Activated naive CD4-positive, alpha-beta T cell treated with anti-CD3 and anti-CD28 coated beads for 36 hours (primary cell): ENCODE measurements at regions of chr19 and their contacts with region 1.

Region 1: DNA sequence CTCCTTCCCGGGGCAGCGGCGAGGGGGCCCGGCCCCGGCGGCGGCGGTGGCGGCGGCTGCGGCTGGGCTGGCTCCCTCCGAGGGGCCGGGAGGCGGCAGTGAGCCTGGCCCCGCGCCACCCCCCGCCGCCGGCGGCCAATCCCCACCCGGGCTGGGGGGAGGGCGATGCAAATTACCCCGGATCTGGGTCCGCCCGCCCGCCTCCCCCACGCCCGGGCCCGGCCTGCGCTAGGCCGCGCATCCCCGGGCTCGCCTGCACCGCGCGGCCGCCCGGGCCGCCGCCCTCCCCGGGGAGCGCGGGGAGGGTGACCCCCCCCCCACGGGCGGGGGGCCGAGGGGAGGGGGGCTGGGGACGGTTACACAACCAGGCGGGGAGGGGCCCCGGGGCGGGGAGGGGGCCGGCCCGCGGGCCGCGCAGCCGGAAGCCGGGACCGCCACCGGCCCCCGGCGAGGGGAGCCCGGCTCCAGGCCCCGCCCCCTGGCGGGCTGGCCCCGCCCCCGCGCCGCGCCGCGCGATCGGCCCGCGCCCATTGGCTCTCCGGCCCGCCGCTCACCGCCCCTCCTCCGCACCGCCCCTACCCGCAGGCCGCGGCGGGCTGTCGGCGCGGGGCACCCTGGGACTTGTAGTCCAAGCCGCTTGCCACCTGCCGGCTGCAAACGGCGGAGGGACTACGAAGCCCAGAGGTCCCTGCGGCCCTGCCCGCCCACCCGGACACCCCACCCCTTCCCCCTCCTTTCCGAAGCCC is 1.1 kb downstream of the ZBTB7A start:
- DNase-seq: peak; percentile 96
- H3K4me3 Mint-ChIP-seq: peak overlapping the region; percentile 56
- H3K27ac Mint-ChIP-seq: no peak overlapping the region
- H3K4me1 Mint-ChIP-seq: peaks cover 36% of the 10 kb centered on the region
- H3K27me3 Mint-ChIP-seq: no peaks in the 10 kb centered on the region

Region 2: DNA sequence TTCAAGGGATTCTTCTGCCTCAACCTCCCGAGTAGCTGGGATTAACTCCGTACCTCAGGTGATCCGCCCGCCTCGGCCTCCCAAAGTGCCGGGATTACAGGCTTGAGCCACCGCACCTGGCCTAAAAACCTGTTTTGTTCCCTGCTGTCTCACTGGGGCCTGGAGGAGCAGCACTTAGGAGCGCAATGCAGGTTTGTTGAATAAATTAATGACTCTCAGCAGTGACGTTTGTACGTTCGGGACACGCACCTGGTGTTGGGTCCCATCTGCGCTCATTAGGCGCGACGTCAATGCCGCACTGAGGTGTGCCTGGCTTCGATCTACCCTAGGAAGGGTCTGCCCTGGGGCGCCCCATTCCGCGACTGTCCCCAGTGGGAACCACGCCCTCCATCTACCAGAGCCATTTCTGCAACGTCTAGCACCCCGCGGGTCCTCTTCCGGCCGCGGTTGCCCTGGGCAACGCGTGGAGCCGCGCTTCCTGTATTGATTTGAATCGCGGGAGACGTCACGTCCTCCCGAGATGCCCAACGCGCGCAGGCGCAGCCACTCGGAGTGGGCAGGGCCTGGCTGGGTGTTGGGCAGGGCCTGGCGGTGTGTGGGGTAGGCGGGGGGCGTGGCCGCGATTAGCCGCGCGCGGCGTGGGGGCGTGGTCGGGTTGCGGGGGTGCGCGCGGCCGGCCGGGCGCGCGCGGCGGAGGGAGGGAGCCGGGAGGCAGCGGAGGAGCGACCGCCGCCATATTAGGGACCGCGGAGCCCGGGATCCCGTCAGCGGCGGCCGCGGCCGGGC is 559.8 kb before region 1 on chr19 and contains the start of gene FZR1:
- CTCF ChIA-PET with region 1: no interaction called
- intact Hi-C with region 1: loop called (anchors 5 kb)
- DNase-seq: peak; percentile 99
- H3K4me3 Mint-ChIP-seq: peak within 1 kb of the TSS; percentile 90
- H3K27ac Mint-ChIP-seq: peak within 1 kb of the TSS; percentile 92
- H3K4me1 Mint-ChIP-seq: peaks cover 39% of the 10 kb centered on the region
- H3K27me3 Mint-ChIP-seq: no peaks in the 10 kb centered on the region
- total RNA-seq, gene FZR1: 40.3 to 46.3 TPM

Region 3: DNA sequence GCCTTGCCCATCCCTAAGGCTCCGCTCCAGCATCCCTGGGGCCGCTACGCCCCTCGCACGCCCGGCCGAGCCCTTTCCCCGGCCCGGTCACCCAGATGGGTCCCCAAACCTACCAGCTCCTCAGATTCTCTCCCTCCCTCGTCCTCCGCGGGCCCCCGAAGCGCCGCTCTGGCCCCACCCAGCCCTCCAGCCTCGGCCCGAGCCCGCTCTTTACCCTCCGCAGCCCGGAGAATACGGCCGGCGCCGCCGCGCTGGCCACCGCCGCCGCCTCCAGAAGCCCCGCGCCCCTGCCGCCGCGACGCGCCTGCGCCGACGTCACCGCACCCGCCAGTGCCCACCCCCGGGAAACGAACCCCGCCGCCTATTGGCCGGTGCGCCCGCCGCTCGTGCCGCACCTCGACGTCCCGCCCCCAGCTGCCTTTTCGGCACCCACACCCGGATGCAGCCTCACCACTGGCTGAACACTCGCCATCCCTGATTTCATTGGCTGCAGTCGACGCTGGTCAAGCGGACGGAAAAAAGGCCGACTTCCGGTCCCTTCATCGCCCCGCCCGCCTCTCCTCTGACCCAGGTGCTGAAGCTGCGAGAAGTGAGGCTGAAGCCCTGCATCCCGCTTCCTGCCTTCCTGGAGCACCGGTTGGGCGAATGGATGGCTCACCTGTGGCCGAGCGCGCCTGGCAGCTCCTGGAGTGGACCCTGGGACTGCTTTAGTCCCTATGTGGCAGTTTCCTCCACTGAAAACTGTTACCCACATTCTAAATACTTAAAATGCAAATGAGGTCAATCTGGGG is 94.6 kb before region 1 on chr19 and contains the start of gene DAPK3:
- CTCF ChIA-PET with region 1: no interaction called
- intact Hi-C with region 1: no loop called
- DNase-seq: peak; percentile 96
- H3K4me3 Mint-ChIP-seq: peak within 1 kb of the TSS; percentile 84
- H3K27ac Mint-ChIP-seq: peak within 1 kb of the TSS; percentile 44
- H3K4me1 Mint-ChIP-seq: peaks cover 22% of the 10 kb centered on the region
- H3K27me3 Mint-ChIP-seq: no peaks in the 10 kb centered on the region
- total RNA-seq, gene DAPK3: 19.3 to 19.6 TPM

Region 4: DNA sequence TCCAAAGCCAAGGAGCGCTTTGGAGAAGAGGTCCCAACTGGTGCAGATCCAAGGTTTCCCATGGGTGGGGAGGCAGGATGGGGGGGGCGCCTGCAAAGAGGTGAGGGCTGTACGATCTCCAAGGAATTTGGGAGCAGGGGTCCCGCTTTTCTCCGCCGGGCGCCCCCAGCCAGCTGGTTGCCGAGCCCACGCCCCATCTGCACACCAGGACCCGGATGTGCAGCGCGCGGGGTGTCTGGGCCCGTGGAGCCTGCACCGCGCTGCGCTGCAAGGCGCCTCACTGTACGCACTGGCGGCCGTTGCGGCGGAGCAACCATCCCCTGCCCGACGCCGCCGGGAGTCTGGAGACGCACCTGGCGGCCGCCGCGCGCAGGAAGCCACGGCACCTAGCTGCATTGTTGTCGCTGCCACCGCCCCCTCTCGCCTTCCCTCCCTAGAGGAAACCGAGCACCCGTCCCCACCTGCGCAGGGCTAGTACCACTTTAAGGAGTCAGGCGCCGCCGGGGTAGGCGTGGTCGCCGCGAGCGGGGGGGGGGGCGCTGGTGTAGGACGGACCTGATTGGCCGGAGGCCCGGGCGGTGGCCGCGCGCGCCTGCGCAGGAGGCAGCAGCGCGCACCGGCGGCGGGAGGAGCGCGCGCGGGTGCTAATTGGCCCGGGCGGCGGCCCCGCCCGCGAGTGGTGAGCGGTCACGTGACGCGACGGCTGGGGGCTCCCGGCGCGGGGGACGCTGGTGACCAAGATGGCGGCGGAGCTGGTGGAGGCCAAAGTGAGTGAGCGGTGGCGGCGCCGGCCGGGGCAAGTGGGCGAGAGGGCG is 58.4 kb before region 1 on chr19 and contains the start of gene PIAS4:
- CTCF ChIA-PET with region 1: no interaction called
- intact Hi-C with region 1: loop called (anchors 1 kb)
- DNase-seq: peak; percentile 96
- H3K4me3 Mint-ChIP-seq: peak within 1 kb of the TSS; percentile 84
- H3K27ac Mint-ChIP-seq: peak within 1 kb of the TSS; percentile 79
- H3K4me1 Mint-ChIP-seq: peaks cover 31% of the 10 kb centered on the region
- H3K27me3 Mint-ChIP-seq: no peaks in the 10 kb centered on the region
- total RNA-seq, gene PIAS4: 16.1 to 20.1 TPM

Region 5: GRCh38 chr19:4023600-4024398 is 41.8 kb before region 1 on chr19:
- CTCF ChIA-PET with region 1: no interaction called
- intact Hi-C with region 1: no loop called
- DNase-seq: no peak
- H3K4me3 Mint-ChIP-seq: no peak overlapping the region
- H3K27ac Mint-ChIP-seq: no peak overlapping the region
- H3K4me1 Mint-ChIP-seq: no peaks in the 10 kb centered on the region
- H3K27me3 Mint-ChIP-seq: no peaks in the 10 kb centered on the region

Region 6: DNA sequence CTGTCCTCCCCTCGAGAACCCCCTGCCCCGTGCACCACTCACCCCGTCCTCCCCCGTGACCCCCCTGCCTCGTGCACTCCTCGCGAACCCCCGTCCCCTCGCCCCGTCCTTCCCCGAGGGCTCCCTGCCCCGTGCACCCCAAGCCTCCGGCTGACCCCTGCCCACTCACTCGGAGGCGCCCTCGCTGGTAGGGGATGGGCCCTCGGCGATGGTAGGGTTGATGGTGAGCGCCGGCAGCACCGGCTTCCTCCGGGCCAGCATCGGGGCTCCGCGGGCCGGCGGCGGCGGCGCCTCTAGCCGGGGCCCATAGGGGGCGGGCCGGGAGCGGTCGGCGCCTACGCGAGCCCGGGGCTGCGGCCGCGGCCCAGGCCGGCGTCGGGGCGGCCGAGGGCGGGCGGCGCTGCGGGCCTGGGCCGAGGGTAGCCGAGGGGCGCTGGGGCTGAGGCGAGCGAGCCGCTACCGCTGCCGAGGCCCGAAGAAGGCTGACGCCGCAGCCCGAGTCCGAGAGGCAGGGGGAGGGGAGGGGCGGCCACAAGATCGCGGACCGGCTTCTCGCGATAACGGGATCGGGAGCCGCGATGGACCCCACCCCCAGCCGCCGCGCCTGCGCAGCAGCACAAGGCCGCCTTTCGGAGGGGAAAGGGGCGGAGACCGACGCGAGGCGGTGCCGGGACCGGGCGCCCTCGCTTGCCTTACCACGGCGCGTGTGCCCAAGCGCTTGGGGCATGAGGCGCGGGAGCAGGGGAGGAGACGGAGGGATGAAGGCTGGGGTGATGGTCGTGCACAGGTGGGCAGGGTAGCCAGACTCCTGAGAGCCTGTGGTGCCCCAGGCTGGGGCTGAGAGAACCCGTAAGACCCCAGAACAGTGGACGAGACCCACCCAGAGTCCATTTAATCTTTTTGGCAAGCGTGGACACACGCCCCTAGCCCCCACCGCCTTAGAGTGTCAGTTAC is 58.3 kb after region 1 on chr19 and contains the start of gene MAP2K2:
- CTCF ChIA-PET with region 1: no interaction called
- intact Hi-C with region 1: loop called (anchors 1 kb)
- DNase-seq: peak; percentile 96
- H3K4me3 Mint-ChIP-seq: peak within 1 kb of the TSS; percentile 85
- H3K27ac Mint-ChIP-seq: peak within 1 kb of the TSS; percentile 84
- H3K4me1 Mint-ChIP-seq: peaks cover 24% of the 10 kb centered on the region
- H3K27me3 Mint-ChIP-seq: no peaks in the 10 kb centered on the region
- total RNA-seq, gene MAP2K2: 101 to 103 TPM

Region 7: DNA sequence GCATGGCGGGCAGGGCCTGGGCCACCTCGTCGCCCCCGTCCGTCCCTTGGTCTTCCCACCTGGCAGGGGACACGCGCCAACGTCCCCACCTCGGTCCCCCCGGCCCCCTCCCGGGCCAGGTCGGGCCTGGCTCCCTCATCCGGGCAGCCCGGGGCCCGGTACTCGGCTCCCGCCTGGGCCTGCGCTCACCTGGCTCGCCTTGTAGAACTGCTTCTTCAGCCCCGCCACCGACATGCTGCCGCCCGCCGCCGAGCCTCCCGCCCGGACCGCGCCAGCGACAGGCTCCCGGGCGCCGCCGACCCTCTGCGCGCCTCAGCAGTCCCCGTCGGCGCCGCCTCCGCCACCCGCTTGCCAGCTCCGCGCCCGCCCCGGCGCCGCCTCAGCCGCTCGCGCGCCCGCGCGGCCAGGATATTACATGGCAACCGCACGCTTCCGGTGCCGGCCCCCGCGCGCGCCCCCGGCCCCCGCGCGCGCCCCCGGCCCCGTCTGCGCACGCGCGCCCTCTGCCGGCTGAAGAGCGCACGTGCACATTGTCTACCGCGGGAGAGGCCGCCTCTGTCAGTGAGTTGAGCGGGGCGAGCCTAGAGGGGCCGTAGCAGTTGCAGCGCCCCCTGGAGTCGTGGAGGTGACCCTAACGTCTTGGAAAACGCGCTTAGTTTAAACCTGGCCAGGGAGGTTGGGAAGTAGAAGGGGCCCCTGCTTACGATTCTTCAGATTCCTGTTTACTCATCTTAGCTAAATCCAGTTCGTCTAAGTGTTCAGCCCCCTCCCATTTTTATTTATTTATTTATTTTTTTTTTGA is 334.7 kb after region 1 on chr19 and contains the start of gene SH3GL1:
- CTCF ChIA-PET with region 1: no interaction called
- intact Hi-C with region 1: loop called (anchors 2 kb)
- DNase-seq: peak; percentile 94
- H3K4me3 Mint-ChIP-seq: peak within 1 kb of the TSS; percentile 94
- H3K27ac Mint-ChIP-seq: peak within 1 kb of the TSS; percentile 93
- H3K4me1 Mint-ChIP-seq: peaks cover 73% of the 10 kb centered on the region
- H3K27me3 Mint-ChIP-seq: no peaks in the 10 kb centered on the region
- total RNA-seq, gene SH3GL1: 31.7 to 32.1 TPM